ENCODE measurements at regions of chr2 and their contacts with region 1.

Region 1: GRCh38 chr2:64101141-64101591 is 43.1 kb downstream of the PELI1 start:
- DNase-seq: peak in 1 of 35 experiments; percentile 26
- ATAC-seq: peak; percentile 52 to 81 (median 78)
- H3K4me3 ChIP-seq: no peak overlapping the region
- H3K4me3 Mint-ChIP-seq: peak overlapping the region; percentile 5 to 36 (median 21)
- H3K27ac ChIP-seq: peak overlapping the region; percentile 44
- H3K27ac Mint-ChIP-seq: peak overlapping the region; percentile 68 to 81
- H3K4me1 ChIP-seq: peaks cover 15 to 25% of the 10 kb centered on the region in 2 experiments
- H3K4me1 Mint-ChIP-seq: peaks cover 51 to 61% (median 60%) of the 10 kb centered on the region in 3 donors
- H3K27me3 ChIP-seq: no peaks in the 10 kb centered on the region
- H3K27me3 Mint-ChIP-seq: no peaks in the 10 kb centered on the region

Region 2: GRCh38 chr2:64080179-64080578 is 21.0 kb before region 1 on chr2:
- CTCF ChIA-PET with region 1: no interaction called
- POLR2A ChIA-PET with region 1: no interaction called
- DNase-seq: no peak
- ATAC-seq: peak in 1 of 4 experiments; percentile 20
- H3K4me3 ChIP-seq: no peak overlapping the region
- H3K4me3 Mint-ChIP-seq: no peak overlapping the region
- H3K27ac ChIP-seq: no peak overlapping the region
- H3K27ac Mint-ChIP-seq: no peak overlapping the region
- H3K4me1 ChIP-seq: no peaks in the 10 kb centered on the region
- H3K4me1 Mint-ChIP-seq: no peaks in the 10 kb centered on the region
- H3K27me3 ChIP-seq: no peaks in the 10 kb centered on the region
- H3K27me3 Mint-ChIP-seq: no peaks in the 10 kb centered on the region

Region 3: DNA sequence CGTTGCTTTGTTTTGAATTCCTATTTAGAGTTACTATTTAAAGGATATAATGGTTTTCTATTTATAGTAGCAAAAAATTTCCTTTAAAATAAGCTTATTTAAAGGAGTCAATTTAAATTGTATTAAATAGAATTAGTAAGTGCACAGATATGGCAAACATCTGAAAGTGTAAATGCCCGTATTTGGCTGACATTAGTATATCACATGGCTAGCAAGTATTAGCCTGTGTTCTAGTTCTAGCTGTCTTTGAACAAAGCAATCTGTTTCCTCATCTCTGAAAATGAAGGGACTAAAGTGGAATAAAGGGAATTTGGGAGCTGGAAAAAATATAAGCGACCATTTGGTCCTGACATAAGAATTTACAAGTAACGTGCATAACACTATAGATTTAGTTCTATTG is 10.8 kb after region 1 on chr2:
- CTCF ChIA-PET with region 1: interaction called in 1 of 2 experiments, 3 read pairs
- POLR2A ChIA-PET with region 1: interaction called, 7 to 10 read pairs
- DNase-seq: no peak
- ATAC-seq: no peak
- H3K4me3 ChIP-seq: no peak overlapping the region
- H3K4me3 Mint-ChIP-seq: no peak overlapping the region
- H3K27ac ChIP-seq: no peak overlapping the region
- H3K27ac Mint-ChIP-seq: no peak overlapping the region
- H3K4me1 ChIP-seq: peaks cover 16 to 34% of the 10 kb centered on the region in 2 experiments
- H3K4me1 Mint-ChIP-seq: peaks cover 77 to 82% (median 79%) of the 10 kb centered on the region in 3 donors
- H3K27me3 ChIP-seq: no peaks in the 10 kb centered on the region
- H3K27me3 Mint-ChIP-seq: no peaks in the 10 kb centered on the region

Region 4: DNA sequence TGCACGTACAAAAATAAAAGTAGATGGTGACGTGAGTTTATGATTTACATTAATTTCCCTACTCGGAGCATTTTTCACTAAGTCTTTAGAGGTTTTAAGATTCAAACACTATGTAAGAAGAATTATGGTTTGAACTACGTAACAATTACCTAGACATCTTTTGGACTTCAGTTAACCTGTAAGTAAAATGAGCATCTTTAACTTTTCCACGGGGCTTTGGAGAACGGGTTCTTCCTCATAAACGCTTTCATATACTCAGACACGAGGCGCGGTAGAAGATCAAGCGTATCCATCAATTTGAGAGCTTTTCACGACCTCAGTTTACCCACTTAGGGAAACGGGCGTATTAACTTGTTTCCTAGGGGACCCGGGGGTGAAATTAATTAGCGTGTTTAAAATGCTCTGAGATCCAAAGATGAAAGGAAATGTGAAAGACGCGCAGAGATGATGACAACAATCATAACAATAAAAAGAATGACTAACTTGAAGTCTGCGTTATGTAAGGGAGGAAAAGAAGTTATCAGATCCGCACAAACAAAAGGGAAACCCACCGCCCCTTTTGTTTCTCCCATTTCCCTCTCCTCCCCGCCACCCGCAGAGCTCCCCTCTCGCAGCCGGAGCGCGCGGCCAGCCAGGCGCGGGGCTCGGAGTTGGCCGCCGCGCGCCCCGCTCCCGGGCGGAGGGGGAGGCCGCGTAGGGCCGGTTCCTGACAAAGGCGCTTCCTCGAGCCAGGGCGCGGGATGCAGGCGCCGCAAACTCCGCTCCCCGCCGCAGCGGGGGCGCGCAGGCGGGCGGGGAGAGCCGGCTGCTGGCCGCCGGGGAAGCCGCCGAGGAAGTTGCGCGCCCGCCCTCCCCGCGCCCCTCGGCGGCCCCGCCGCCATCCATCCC is 42.2 kb after region 1 on chr2:
- CTCF ChIA-PET with region 1: interaction called, 3 to 6 read pairs
- POLR2A ChIA-PET with region 1: interaction called, 5 to 13 read pairs
- DNase-seq: peak in 30 of 35 experiments; percentile 4 to 64 (median 23)
- ATAC-seq: peak; percentile 15 to 53 (median 50)
- H3K4me3 ChIP-seq: peak overlapping the region; percentile 77 to 81
- H3K4me3 Mint-ChIP-seq: peak overlapping the region in 2 of 3 donors; percentile 91 to 98
- H3K27ac ChIP-seq: peak overlapping the region; percentile 84
- H3K27ac Mint-ChIP-seq: peak overlapping the region; percentile 93 to 97
- H3K4me1 ChIP-seq: peaks cover 13 to 36% of the 10 kb centered on the region in 2 experiments
- H3K4me1 Mint-ChIP-seq: peaks cover 30 to 39% (median 38%) of the 10 kb centered on the region in 3 donors
- H3K27me3 ChIP-seq: no peaks in the 10 kb centered on the region
- H3K27me3 Mint-ChIP-seq: no peaks in the 10 kb centered on the region